ENCODE measurements at regions of chr12 and their contacts with region 1.

Region 1: DNA sequence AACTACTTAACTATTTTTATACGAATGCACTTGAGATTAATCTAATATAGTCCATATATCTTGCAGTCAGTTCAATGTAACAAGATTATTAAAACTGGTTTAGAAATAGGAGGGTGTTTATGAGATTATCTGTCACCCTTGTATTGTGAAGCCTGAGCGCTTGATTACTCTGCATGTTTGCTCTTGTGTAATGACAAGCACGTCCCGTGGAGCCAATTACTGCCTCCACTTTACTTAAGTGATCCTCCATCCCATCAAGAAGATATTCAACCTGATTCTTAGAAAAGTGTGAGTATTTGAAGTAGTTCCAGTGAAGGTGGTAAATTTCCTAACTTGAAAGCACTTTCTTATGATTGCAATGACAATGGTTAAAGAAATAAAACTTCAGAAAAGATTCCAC is 415.2 kb upstream of the GARIN6 start:
- DNase-seq: no peak
- H3K4me3 ChIP-seq: no peak overlapping the region
- H3K27ac ChIP-seq: no peak overlapping the region
- H3K4me1 ChIP-seq: no peaks in the 10 kb centered on the region
- H3K27me3 ChIP-seq: no peaks in the 10 kb centered on the region
- CTCF ChIP-seq: no peak
- EP300 ChIP-seq: no peak
- POLR2A ChIP-seq: no peak
- RAD21 ChIP-seq: no peak

Region 2: GRCh38 chr12:99099786-99100185 is 132.5 kb before region 1 on chr12:
- CTCF ChIA-PET with region 1: no interaction called
- POLR2A ChIA-PET with region 1: no interaction called
- DNase-seq: no peak
- H3K4me3 ChIP-seq: no peak overlapping the region
- H3K27ac ChIP-seq: no peak overlapping the region
- H3K4me1 ChIP-seq: 0 out of 7 replicates have a peak, but pooled peaks cover 0 to 3% (median 0%) of the 10 kb centered on the region in 4 experiments
- H3K27me3 ChIP-seq: no peaks in the 10 kb centered on the region
- CTCF ChIP-seq: no peak
- EP300 ChIP-seq: no peak
- POLR2A ChIP-seq: no peak
- RAD21 ChIP-seq: no peak

Region 3: DNA sequence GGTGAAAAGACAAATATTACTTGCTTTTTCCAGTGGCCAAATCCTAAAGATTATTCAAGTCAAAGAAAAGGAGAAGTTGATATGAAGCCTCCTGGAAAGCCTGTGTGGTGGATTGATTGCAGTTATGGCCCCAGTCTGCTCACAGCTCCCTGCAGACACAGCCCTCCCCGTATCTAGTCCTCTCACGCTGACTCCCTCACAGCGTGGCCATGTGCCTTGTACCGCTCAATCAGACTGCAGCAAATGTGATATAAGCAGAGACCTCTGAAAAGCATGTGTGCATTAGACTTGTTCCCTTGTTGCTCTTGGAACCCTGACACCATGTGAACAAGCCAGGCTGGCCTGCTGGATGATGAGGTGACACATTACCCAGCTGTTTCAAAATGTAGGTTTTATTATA is 17.2 kb after region 1 on chr12:
- CTCF ChIA-PET with region 1: interaction called, 15 read pairs
- POLR2A ChIA-PET with region 1: interaction called, 4 read pairs
- DNase-seq: no peak
- H3K4me3 ChIP-seq: no peak overlapping the region
- H3K27ac ChIP-seq: no peak overlapping the region
- H3K4me1 ChIP-seq: peaks cover 1 to 10% (median 7%) of the 10 kb centered on the region in 4 experiments; a peak in 5 of 7 replicates
- H3K27me3 ChIP-seq: no peaks in the 10 kb centered on the region
- CTCF ChIP-seq: no peak
- EP300 ChIP-seq: no peak
- POLR2A ChIP-seq: no peak
- RAD21 ChIP-seq: no peak

Region 4: DNA sequence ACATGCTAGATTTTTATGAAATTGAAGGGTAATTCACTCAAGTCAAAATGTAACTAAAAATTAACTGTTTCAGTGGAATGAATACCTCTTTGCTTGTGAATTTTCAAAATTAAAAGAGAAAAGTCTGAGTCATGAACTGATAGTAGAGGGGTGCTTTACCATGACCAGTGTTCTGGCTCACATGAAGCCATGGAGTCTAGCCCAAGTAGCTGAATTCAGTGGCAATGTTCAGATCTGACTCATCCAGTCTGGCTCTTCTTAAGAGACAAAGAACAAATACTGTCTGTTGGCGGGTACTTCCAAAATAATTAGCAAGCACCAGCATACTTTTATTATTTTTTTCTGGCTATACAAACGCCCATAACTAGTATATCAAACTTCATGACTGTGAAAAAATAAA is 49.0 kb after region 1 on chr12:
- CTCF ChIA-PET with region 1: no interaction called
- POLR2A ChIA-PET with region 1: no interaction called
- DNase-seq: no peak
- H3K4me3 ChIP-seq: no peak overlapping the region
- H3K27ac ChIP-seq: no peak overlapping the region
- H3K4me1 ChIP-seq: no peaks in the 10 kb centered on the region
- H3K27me3 ChIP-seq: no peaks in the 10 kb centered on the region
- CTCF ChIP-seq: no peak
- EP300 ChIP-seq: no peak
- POLR2A ChIP-seq: no peak
- RAD21 ChIP-seq: no peak

Region 5: GRCh38 chr12:99476956-99477355 is 244.6 kb after region 1 on chr12:
- CTCF ChIA-PET with region 1: no interaction called
- POLR2A ChIA-PET with region 1: no interaction called
- DNase-seq: no peak
- H3K4me3 ChIP-seq: no peak overlapping the region
- H3K27ac ChIP-seq: no peak overlapping the region
- H3K4me1 ChIP-seq: no peaks in the 10 kb centered on the region; a peak in 2 of 7 replicates
- H3K27me3 ChIP-seq: no peaks in the 10 kb centered on the region
- CTCF ChIP-seq: no peak
- EP300 ChIP-seq: no peak
- POLR2A ChIP-seq: no peak
- RAD21 ChIP-seq: no peak

Measured in H1 (cell line).